ENCODE measurements at regions of chr22 and their contacts with region 1.

Region 1: GRCh38 chr22:36873680-36874537 is 13.1 kb downstream of the NCF4 start:
- DNase-seq: peak; percentile 88
- H3K4me3 ChIP-seq: no peak overlapping the region
- H3K27ac ChIP-seq: peak overlapping the region; percentile 64
- H3K4me1 ChIP-seq: peaks cover 42% of the 10 kb centered on the region
- H3K27me3 ChIP-seq: no peaks in the 10 kb centered on the region
- CTCF ChIP-seq: peak; percentile 63 to 72

Region 2: GRCh38 chr22:37032546-37033460 is 158.9 kb after region 1 on chr22:
- CTCF ChIA-PET with region 1: no interaction called
- dilution Hi-C with region 1: no loop called
- in situ Hi-C with region 1: loop called in 1 of 2 experiments (anchors 10 kb)
- intact Hi-C with region 1: no loop called
- DNase-seq: peak; percentile 86
- H3K4me3 ChIP-seq: no peak overlapping the region
- H3K27ac ChIP-seq: peak overlapping the region; percentile 54
- H3K4me1 ChIP-seq: peaks cover 20% of the 10 kb centered on the region
- H3K27me3 ChIP-seq: no peaks in the 10 kb centered on the region
- CTCF ChIP-seq: no peak